ENCODE measurements at regions of chr6 and their contacts with region 1.

Region 1: GRCh38 chr6:125749173-125749864 is at the start of gene HEY2:
- DNase-seq: peak; percentile 97
- ATAC-seq: peak; percentile 94
- total RNA-seq, gene HEY2: 57.5 TPM

Region 2: GRCh38 chr6:125153391-125154117 is 595.8 kb before region 1 on chr6 and contains the start of gene TPD52L1:
- intact Hi-C with region 1: loop called (anchors 10 kb)
- DNase-seq: peak; percentile 90
- ATAC-seq: peak; percentile 96
- total RNA-seq, gene TPD52L1: 56.2 TPM

Region 3: GRCh38 chr6:125314019-125314581 is 435.2 kb before region 1 on chr6:
- intact Hi-C with region 1: loop called (anchors 5 kb)
- DNase-seq: peak; percentile 54
- ATAC-seq: peak; percentile 87

Region 4: GRCh38 chr6:125363039-125363823 is 386.1 kb before region 1 on chr6:
- intact Hi-C with region 1: loop called (anchors 1 kb)
- DNase-seq: peak; percentile 82
- ATAC-seq: peak; percentile 87

Region 5: DNA sequence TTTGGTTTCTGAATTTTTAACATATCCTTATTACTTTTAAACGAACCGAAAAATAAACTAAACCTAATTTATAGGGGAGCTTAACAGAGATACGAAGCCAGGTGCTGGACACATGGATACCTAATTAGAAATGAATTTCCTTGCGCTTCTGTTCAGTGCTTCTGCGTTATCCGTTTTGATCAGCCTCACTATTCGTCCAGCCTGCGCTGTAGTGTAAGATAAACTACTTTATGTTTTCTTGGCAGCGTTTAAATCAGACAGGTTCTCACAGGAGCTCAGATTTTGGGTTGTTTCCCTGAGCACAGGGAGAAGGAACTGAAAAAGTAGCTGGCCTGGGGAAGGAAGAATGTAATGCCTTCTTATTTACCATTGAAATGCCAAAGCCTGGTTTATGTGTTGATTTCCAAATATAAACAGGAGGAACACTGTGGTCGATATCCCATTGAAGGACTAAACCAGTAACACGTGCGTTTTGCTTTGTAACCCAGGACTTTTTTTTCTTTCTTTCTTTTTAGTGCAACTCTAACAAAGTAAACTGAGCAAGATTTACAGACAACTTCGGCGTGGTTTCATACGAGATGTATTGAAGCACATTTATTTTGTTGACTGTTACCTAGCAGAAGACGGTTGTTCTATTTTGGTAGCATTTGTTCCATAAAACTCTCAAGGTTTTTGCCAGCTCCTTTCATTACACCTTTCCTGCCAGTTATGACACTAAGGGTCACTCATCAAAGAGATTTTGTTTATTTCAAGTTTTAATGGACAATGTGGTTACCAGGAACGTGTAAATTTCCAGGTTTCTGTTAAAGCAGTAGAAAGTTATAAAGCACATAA is 214.7 kb before region 1 on chr6:
- intact Hi-C with region 1: loop called (anchors 5 kb)
- DNase-seq: no peak
- ATAC-seq: no peak

Region 6: GRCh38 chr6:125584468-125585029 is 164.8 kb before region 1 on chr6:
- intact Hi-C with region 1: loop called (anchors 2 kb)
- DNase-seq: peak; percentile 64
- ATAC-seq: peak; percentile 84

Region 7: GRCh38 chr6:125853740-125854139 is 104.4 kb after region 1 on chr6:
- intact Hi-C with region 1: no loop called
- DNase-seq: no peak
- ATAC-seq: no peak

Measured in Right ventricle myocardium inferior (tissue), 1 donor.